CD14-positive monocyte (primary cell): ENCODE measurements at regions of chr15 and their contacts with region 1.

Region 1: DNA sequence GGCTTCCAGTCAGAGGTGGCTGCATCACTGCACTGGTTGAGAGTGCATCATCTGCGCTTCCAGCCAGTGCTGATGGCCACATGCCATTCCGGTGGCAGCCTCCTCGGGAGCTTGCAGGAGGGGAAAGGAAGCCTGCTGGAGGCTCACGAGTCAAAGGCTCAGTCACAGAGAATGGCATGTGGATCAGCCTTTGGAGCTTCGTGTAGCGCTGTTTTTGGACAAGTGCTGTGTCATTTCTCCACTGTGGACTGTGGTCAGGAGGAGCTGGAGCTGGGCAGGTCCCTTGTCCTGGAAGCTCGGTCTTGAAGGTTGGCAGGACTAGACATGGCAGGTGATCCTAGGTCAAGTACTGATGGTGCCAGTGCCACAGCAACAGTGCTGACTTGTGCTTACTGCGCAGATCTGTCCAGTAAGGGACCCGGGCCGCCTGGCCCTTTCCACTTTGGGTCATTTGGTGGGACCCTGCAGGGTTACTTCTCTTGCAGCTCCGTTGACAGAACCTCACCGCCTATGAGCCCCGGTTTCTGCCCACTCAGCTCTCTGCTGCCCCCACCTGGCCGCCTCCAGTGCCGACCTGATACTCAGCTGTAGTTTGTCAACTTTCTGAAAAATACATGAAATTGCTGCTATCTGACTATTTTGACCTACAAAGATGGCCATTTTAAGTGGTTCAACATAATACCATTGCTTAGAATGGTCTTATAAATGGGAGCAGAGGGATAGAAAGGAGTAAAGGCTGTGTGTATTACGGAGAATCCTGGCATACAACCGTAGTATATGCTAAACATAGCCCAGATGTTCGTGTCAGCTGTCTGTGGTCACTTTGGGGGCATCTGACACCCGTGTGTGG is 27.6 kb upstream of the TRPM1 start:
- DNase-seq: peak; percentile 61 to 64 (median 61)
- H3K4me3 ChIP-seq: no peak overlapping the region
- H3K4me3 Mint-ChIP-seq: no peak overlapping the region
- H3K27ac ChIP-seq: no peak overlapping the region
- H3K27ac Mint-ChIP-seq: no peak overlapping the region
- H3K4me1 ChIP-seq: peaks cover 4 to 12% of the 10 kb centered on the region in 2 donors
- H3K4me1 Mint-ChIP-seq: peaks cover 10% of the 10 kb centered on the region
- H3K27me3 ChIP-seq: no peaks in the 10 kb centered on the region
- H3K27me3 Mint-ChIP-seq: peaks cover 0 to 5% (median 3%) of the 10 kb centered on the region in 3 donors
- CTCF ChIP-seq: peak; percentile 93

Region 2: GRCh38 chr15:30670056-30670455 is 459.1 kb before region 1 on chr15:
- intact Hi-C with region 1: loop called in 1 of 2 experiments (anchors 10 kb)
- DNase-seq: no peak
- H3K4me3 ChIP-seq: no peak overlapping the region
- H3K4me3 Mint-ChIP-seq: no peak overlapping the region
- H3K27ac ChIP-seq: no peak overlapping the region
- H3K27ac Mint-ChIP-seq: peak overlapping the region in 3 of 7 donors; percentile 17 to 77 (median 28)
- H3K4me1 ChIP-seq: no peaks in the 10 kb centered on the region
- H3K4me1 Mint-ChIP-seq: no peaks in the 10 kb centered on the region
- H3K27me3 ChIP-seq: no peaks in the 10 kb centered on the region
- H3K27me3 Mint-ChIP-seq: no peaks in the 10 kb centered on the region
- CTCF ChIP-seq: no peak

Region 3: DNA sequence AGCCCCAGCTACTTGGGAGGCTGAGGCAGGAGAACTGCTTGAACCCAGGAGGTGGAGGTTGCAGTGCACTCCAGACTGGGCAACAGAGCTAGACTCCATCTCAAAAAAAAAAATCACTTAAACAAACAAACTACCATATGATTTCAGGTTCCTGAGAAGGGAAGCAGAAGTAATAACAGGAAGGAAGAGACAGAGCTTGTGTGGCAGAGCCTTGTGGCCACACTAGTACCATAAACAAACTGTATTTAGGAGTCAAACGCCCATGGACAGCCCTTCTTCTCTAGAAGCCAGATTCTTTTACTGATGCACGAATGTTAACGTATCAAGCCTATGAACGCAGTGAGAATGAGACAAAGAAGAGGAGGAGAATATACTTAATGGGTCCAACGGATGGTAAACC is 149.7 kb before region 1 on chr15:
- intact Hi-C with region 1: loop called in 1 of 2 experiments (anchors 10 kb)
- DNase-seq: peak; percentile 42 to 64 (median 47)
- H3K4me3 ChIP-seq: peak overlapping the region in 1 of 3 experiments; percentile 43
- H3K4me3 Mint-ChIP-seq: peak overlapping the region in 1 of 2 donors; percentile 67
- H3K27ac ChIP-seq: peak overlapping the region in 1 of 2 donors; percentile 65
- H3K27ac Mint-ChIP-seq: peak overlapping the region; percentile 60 to 87 (median 75)
- H3K4me1 ChIP-seq: peaks cover 28 to 34% of the 10 kb centered on the region in 2 donors
- H3K4me1 Mint-ChIP-seq: peaks cover 49% of the 10 kb centered on the region
- H3K27me3 ChIP-seq: no peaks in the 10 kb centered on the region
- H3K27me3 Mint-ChIP-seq: no peaks in the 10 kb centered on the region
- CTCF ChIP-seq: no peak

Region 4: GRCh38 chr15:31091481-31091880 is 37.7 kb before region 1 on chr15:
- intact Hi-C with region 1: no loop called
- DNase-seq: no peak
- H3K4me3 ChIP-seq: no peak overlapping the region
- H3K4me3 Mint-ChIP-seq: no peak overlapping the region
- H3K27ac ChIP-seq: no peak overlapping the region
- H3K27ac Mint-ChIP-seq: no peak overlapping the region
- H3K4me1 ChIP-seq: no peaks in the 10 kb centered on the region
- H3K4me1 Mint-ChIP-seq: peaks cover 7% of the 10 kb centered on the region
- H3K27me3 ChIP-seq: no peaks in the 10 kb centered on the region
- H3K27me3 Mint-ChIP-seq: peaks cover 0 to 3% (median 1%) of the 10 kb centered on the region in 3 donors
- CTCF ChIP-seq: no peak